BJ (cell line): ENCODE measurements at regions of chr22 and their contacts with region 1.

Region 1: DNA sequence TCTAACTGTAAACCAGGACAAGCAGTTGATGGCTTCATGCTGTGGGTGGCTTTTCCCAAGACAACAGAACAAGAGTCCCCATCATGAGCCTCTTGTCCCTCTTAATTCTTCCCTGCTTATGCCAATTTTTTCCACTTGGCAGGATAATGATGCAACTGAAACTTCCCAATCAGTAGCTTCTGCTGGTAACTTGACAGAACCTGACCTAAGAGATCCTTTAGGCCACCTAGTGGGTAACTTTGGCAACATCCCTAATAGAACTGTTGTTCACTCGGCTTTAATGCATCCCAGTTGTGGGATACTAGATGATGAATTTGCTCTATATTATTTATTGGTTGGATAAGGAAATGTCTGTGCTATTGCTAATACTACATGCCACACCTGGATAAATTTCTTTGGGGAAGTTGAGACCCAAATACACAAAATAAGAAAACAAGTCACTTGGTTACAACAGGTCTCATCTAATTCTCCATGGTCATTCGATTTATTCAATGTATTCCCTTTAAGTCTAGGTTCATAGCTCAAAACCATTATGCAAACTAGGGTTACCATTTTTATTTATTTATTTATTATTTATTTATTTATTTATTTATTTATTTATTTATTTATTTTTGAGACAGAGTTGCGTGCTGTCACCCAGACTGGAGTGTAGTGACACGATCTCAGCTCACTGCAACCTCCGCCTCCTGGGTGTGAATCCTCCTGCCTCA is 41.4 kb upstream of the NFAM1 start:
- DNase-seq: peak; percentile 9
- H3K4me3 ChIP-seq: no peak overlapping the region
- H3K27me3 ChIP-seq: 0 out of 2 replicates have a peak, but pooled peaks cover 3% of the 10 kb centered on the region
- CTCF ChIP-seq: peak; percentile 80

Region 2: GRCh38 chr22:42090596-42091454 is 382.8 kb before region 1 on chr22 and contains the start of gene NDUFA6:
- CTCF ChIA-PET with region 1: interaction called, 11 read pairs
- POLR2A ChIA-PET with region 1: no interaction called
- DNase-seq: peak; percentile 97
- H3K4me3 ChIP-seq: peak within 1 kb of the TSS; percentile 59
- H3K27me3 ChIP-seq: no peaks in the 10 kb centered on the region
- CTCF ChIP-seq: peak; percentile 92
- polyA plus RNA-seq, gene NDUFA6: 76.0 and 85.6 TPM in 2 replicates

Region 3: GRCh38 chr22:42414565-42415303 is 58.9 kb before region 1 on chr22:
- CTCF ChIA-PET with region 1: no interaction called
- POLR2A ChIA-PET with region 1: interaction called, 22 read pairs
- DNase-seq: no peak
- H3K4me3 ChIP-seq: no peak overlapping the region
- H3K27me3 ChIP-seq: peaks cover 2% of the 10 kb centered on the region; the same call in 1 of the 2 replicates
- CTCF ChIP-seq: no peak

Region 4: DNA sequence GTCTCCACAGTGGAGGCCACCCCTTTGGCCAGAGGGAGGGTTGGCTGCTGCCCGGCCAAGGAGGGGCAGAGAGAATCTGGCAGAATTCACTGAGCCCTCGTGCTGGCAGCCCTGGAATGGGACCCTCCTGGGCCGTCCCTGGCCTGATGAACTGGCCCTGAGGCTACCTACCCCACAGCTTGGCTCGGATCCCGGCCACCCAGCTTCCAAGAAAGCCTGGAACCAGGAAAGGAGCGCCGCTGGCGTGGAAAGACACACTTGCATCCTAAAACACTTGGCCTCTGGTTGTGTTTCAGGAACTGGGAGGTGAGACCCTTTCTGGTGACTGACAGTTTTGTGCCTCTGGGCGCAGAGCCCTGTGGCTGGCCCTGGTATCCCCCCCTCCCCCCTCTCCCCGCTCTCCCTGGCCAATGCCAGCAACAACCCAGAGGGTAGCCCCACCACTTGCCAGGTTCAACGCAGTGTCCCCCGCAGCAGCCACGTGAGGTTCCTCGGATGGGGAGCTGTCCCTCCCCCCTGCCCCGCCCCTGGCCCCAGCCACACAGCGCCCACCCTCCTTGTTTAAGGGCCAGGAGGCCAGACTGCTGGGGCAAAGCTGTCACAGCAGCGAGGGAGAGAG is 42.1 kb before region 1 on chr22:
- CTCF ChIA-PET with region 1: no interaction called
- POLR2A ChIA-PET with region 1: no interaction called
- DNase-seq: no peak
- H3K4me3 ChIP-seq: no peak overlapping the region
- H3K27me3 ChIP-seq: peaks cover 33% of the 10 kb centered on the region
- CTCF ChIP-seq: no peak

Region 5: GRCh38 chr22:42452456-42452855 is 21.2 kb before region 1 on chr22:
- CTCF ChIA-PET with region 1: interaction called, 16 read pairs
- POLR2A ChIA-PET with region 1: no interaction called
- DNase-seq: no peak
- H3K4me3 ChIP-seq: no peak overlapping the region
- H3K27me3 ChIP-seq: peaks cover 4% of the 10 kb centered on the region
- CTCF ChIP-seq: no peak

Region 6: GRCh38 chr22:42462016-42462415 is 11.6 kb before region 1 on chr22:
- CTCF ChIA-PET with region 1: interaction called, 16 read pairs
- POLR2A ChIA-PET with region 1: no interaction called
- DNase-seq: no peak
- H3K4me3 ChIP-seq: no peak overlapping the region
- H3K27me3 ChIP-seq: peaks cover 18% of the 10 kb centered on the region
- CTCF ChIP-seq: no peak